ENCODE measurements at regions of chr17 and their contacts with region 1.

Region 1: DNA sequence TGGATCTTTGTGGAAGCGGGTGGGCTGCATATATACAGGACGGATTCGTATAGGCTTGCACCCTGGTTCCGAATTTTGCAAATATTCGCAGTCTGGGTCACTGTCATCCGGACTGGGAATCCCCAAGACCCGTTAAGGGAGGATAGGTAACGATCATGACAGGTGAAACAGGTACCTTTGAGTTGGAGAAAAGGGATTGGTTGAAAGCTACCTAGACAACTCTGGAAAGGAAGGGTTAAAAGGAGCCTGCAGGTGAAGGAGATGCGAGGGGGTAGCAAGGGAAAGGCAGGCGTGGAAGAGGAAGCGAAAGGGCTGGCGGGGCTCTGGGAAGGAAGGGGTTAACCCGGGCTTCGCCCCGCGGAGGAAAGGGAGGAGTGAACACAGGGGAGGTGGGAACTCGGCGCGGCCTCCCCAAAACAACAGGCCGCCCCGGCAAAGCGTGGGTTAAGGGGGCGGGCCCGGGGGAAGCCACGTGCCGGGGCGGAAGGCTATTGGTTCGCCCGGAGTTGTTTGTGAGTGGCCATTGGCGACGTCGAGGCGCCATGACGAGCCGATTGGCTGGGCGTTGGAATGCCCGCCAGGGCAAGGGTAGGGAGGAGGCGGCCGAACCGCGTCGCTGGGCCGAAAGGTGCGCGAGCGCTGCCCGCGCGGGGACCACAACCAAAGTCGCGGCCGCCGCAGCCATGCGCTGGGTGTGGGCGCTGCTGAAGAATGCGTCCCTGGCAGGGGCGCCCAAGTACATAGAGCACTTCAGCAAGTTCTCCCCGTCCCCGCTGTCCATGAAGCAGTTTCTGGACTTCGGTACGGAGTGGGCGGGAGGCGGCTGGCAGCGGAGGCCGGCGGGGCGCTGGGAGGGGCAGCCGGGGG is at the start of gene PDK2:
- DNase-seq: peak; percentile 95 to 96
- ATAC-seq: peak; percentile 79 to 83
- H3K4me3 ChIP-seq: peak within 1 kb of the TSS; percentile 86 to 97 (median 90)
- H3K27ac ChIP-seq: peak within 1 kb of the TSS; percentile 96 to 99 (median 98)
- H3K4me1 ChIP-seq: peaks cover 43 to 47% of the 10 kb centered on the region in 2 donors
- H3K27me3 ChIP-seq: no peaks in the 10 kb centered on the region
- CTCF ChIP-seq: no peak
- POLR2A ChIP-seq: peak; percentile 93 to 95
- total RNA-seq, gene PDK2: 111 to 335 (median 124) TPM

Region 2: DNA sequence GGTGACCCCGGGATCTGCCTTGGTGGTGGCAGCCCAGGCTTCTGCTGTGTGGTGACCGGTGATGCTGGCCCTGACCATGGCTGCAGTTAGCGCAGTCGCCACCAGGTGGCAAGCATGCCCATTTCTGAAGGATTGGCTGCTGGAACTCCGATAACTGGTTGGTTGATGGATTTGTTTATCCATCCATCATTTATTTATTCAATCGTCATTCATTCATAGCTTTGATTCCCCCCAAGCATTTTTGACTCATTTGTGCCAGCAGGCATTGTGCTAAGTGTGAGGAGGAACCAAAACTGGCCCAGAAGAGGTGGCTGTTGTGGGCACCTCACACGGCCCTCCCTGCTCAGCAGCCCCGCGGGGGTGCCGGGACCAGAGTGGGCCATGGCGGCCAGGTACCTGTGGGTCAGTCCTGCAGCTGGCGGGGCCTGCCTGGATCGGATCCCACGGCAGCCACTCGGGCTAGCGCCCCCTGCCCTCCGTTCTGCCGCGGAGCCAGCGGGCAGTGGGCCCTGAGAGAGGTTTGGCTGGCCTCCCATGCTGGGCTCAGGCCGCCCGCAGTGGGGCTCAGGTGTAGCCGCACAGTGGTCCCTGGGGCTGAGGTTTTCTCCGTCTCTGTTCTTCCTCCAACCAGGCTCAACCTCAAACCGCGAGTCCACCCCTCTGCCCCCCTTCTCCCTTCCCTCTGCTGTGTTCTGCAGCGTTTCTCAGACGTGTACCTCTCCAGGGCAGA is 67.9 kb before region 1 on chr17:
- in situ Hi-C with region 1: loop called in 1 of 4 experiments (anchors 5 kb)
- intact Hi-C with region 1: no loop called
- DNase-seq: peak; percentile 59 to 69
- ATAC-seq: peak; percentile 83 to 85
- H3K4me3 ChIP-seq: no peak overlapping the region
- H3K27ac ChIP-seq: no peak overlapping the region
- H3K4me1 ChIP-seq: peaks cover 0 to 5% of the 10 kb centered on the region in 2 donors
- H3K27me3 ChIP-seq: no peaks in the 10 kb centered on the region
- CTCF ChIP-seq: peak; percentile 89 to 98 (median 97)
- POLR2A ChIP-seq: no peak

Region 3: GRCh38 chr17:50060951-50061692 is 33.9 kb before region 1 on chr17:
- in situ Hi-C with region 1: no loop called
- intact Hi-C with region 1: loop called (anchors 1 kb)
- DNase-seq: peak; percentile 65 to 90
- ATAC-seq: peak; percentile 28 to 50
- H3K4me3 ChIP-seq: no peak overlapping the region
- H3K27ac ChIP-seq: peak overlapping the region; percentile 91 to 96 (median 92)
- H3K4me1 ChIP-seq: peaks cover 84 to 96% of the 10 kb centered on the region in 2 donors
- H3K27me3 ChIP-seq: no peaks in the 10 kb centered on the region
- CTCF ChIP-seq: no peak
- POLR2A ChIP-seq: peak in 1 of 2 donors; percentile 42

Region 4: GRCh38 chr17:50161023-50161910 is 66.3 kb after region 1 on chr17:
- in situ Hi-C with region 1: no loop called
- intact Hi-C with region 1: loop called (anchors 2 kb)
- DNase-seq: peak; percentile 81 to 85
- ATAC-seq: peak; percentile 67 to 70
- H3K4me3 ChIP-seq: peak overlapping the region; percentile 52 to 73 (median 62)
- H3K27ac ChIP-seq: peak overlapping the region; percentile 53 to 69 (median 60)
- H3K4me1 ChIP-seq: peaks cover 27 to 39% of the 10 kb centered on the region in 2 donors
- H3K27me3 ChIP-seq: no peaks in the 10 kb centered on the region
- CTCF ChIP-seq: peak; percentile 94 to 97 (median 95)
- POLR2A ChIP-seq: peak; percentile 36 to 38

Region 5: GRCh38 chr17:50177983-50178834 is 83.2 kb after region 1 on chr17:
- in situ Hi-C with region 1: loop called in 1 of 4 experiments (anchors 5 kb)
- intact Hi-C with region 1: loop called (anchors 1 kb)
- DNase-seq: peak; percentile 70 to 93
- ATAC-seq: peak; percentile 90 to 91
- H3K4me3 ChIP-seq: peak overlapping the region in 1 of 4 donors; percentile 21
- H3K27ac ChIP-seq: peak overlapping the region; percentile 98 to 100 (median 99)
- H3K4me1 ChIP-seq: peaks cover 26 to 39% of the 10 kb centered on the region in 2 donors
- H3K27me3 ChIP-seq: no peaks in the 10 kb centered on the region
- CTCF ChIP-seq: peak in 4 of 5 experiments; percentile 50 to 67 (median 54)
- POLR2A ChIP-seq: peak in 1 of 2 donors; percentile 48

Region 6: GRCh38 chr17:50425682-50426471 is 330.9 kb after region 1 on chr17 and contains the start of gene ACSF2:
- in situ Hi-C with region 1: no loop called
- intact Hi-C with region 1: loop called (anchors 10 kb)
- DNase-seq: peak; percentile 69 to 77
- ATAC-seq: peak; percentile 48 to 55
- H3K4me3 ChIP-seq: peak within 1 kb of the TSS; percentile 68 to 94 (median 86)
- H3K27ac ChIP-seq: peak within 1 kb of the TSS; percentile 93 to 96 (median 94)
- H3K4me1 ChIP-seq: peaks cover 40 to 50% of the 10 kb centered on the region in 2 donors
- H3K27me3 ChIP-seq: no peaks in the 10 kb centered on the region
- CTCF ChIP-seq: no peak
- POLR2A ChIP-seq: peak; percentile 81 to 88
- total RNA-seq, gene ACSF2: 8.7 to 61.4 (median 34.2) TPM